Heart right ventricle (tissue), 16 donors: ENCODE measurements at regions of chr1 and their contacts with region 1.

Region 1: GRCh38 chr1:36134505-36135329 is 9.7 kb upstream of the COL8A2 start:
- DNase-seq: peak in 1 of 2 donors; percentile 46
- ATAC-seq: peak; percentile 24 to 78 (median 62)
- H3K4me3 ChIP-seq: no peak overlapping the region
- H3K27ac ChIP-seq: peak overlapping the region in 7 of 10 donors; percentile 41 to 84 (median 73)
- H3K4me1 ChIP-seq: peaks cover 6 to 54% (median 41%) of the 10 kb centered on the region in 9 donors
- H3K27me3 ChIP-seq: no peaks in the 10 kb centered on the region
- CTCF ChIP-seq: peak; percentile 27 to 76 (median 69)

Region 2: DNA sequence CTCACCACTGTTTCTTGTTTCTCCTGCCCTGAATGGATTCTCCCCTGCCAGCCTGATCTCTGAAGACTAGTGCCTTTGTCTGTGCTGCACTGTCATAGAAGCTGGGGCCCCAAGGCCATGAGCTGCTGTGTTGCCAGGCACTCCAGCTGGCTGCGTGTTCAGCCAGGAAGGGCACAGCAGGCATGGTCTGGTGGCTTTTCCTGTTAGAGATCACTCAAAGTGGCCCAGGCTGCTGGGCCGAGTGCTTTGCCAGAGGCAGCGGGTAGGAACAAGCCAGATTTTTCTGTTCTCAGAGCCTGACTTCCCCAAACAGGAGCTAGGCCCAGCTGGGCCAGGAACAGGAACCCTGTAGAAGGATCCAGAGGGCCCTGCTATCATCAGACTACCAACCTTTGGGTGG is 40.8 kb before region 1 on chr1:
- intact Hi-C with region 1: loop called in 7 of 10 experiments (anchors 1 to 5 kb)
- DNase-seq: no peak
- ATAC-seq: peak in 4 of 8 donors; percentile 15 to 58 (median 26)
- H3K4me3 ChIP-seq: no peak overlapping the region
- H3K27ac ChIP-seq: peak overlapping the region in 6 of 10 donors; percentile 5 to 51 (median 32)
- H3K4me1 ChIP-seq: peaks cover 3 to 62% (median 53%) of the 10 kb centered on the region in 9 donors
- H3K27me3 ChIP-seq: no peaks in the 10 kb centered on the region
- CTCF ChIP-seq: no peak